AG04450 (cell line): ENCODE measurements at regions of chr11 and their contacts with region 1.

Region 1: DNA sequence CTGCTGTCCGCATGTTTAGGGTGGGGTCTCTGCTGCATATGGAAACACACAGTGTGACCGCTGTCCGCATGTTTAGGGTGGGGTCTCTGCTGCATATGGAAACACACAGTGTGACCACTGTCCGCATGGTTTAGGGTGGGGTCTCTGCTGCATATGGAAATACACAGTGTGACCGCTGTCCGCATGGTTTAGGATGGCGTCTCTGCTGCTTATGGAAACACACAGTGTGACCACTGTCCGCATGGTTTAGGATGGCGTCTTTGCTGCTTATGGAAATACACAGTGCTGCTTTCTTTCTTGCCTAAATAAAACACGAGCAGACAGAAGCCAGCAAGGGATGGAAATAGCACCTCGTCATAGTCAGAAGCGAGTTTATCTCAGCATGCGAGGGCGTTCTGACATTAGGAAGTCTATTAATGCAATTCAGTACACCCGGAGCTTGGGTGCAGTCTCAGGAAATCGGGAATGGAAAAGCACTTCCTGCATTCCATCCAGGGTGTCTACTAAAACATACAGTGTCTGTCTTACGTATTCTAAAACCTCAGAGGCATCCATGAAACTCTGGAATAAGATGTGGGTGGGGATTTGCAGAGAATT is 32.6 kb upstream of the TOLLIP start:
- DNase-seq: no peak
- H3K4me3 ChIP-seq: no peak overlapping the region
- H3K27ac ChIP-seq: no peak overlapping the region
- H3K27me3 ChIP-seq: peaks cover 10% of the 10 kb centered on the region
- CTCF ChIP-seq: no peak

Region 2: GRCh38 chr11:1414650-1415049 is 72.6 kb after region 1 on chr11:
- CTCF ChIA-PET with region 1: interaction called, 10 read pairs
- POLR2A ChIA-PET with region 1: no interaction called
- DNase-seq: no peak
- H3K4me3 ChIP-seq: no peak overlapping the region
- H3K27ac ChIP-seq: no peak overlapping the region
- H3K27me3 ChIP-seq: no peaks in the 10 kb centered on the region
- CTCF ChIP-seq: no peak